ENCODE measurements at regions of chr4 and their contacts with region 1.

Region 1: DNA sequence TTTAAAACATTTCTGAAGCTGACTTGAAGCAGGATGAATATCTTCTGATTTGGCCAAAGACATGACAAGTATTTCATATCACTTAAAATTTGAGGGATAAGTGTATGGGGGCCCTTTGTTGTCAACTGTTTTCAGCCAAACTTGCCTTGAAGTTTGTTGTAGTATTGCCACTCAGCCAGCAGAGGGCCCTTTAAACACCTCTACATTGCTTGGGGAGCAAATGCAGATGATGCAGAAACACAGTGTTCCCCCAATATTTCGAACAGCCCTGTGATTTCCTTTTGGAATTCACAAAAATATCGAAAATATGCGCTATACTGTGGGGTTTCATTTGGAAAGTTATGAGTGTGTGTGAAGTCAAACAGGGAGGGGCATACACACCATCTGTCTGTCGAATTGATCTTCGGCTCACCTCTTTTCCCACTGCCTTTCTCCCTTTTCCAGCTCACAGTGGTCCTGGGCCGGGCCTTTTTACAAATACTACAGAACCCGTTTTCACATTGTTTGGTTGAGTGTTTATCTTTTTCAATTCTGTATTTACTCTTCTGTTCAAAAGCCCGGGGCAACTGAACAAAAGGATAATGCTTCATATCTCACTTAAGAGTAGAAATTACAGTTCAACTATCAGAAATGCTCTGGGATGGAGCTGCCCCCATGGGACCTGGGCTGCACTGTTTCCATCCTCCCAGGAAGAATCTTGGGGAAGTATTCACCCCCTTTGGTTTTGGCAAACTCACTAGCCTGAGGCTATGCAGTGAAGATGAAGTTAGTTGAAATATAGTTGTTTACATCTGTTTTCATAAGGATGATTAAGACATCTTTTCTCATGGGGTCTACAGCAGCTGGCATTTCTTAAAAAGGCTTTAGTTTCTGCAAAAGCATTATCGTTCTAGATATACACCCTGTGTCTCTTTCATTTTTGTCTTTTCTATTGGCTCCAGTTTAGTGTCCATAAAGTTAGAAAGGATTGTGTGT is 137.6 kb downstream of the EGF start:
- DNase-seq: peak; percentile 27
- H3K4me3 Mint-ChIP-seq: no peak overlapping the region
- H3K27ac Mint-ChIP-seq: no peak overlapping the region
- H3K4me1 Mint-ChIP-seq: peaks cover 11% of the 10 kb centered on the region
- H3K27me3 Mint-ChIP-seq: no peaks in the 10 kb centered on the region

Region 2: DNA sequence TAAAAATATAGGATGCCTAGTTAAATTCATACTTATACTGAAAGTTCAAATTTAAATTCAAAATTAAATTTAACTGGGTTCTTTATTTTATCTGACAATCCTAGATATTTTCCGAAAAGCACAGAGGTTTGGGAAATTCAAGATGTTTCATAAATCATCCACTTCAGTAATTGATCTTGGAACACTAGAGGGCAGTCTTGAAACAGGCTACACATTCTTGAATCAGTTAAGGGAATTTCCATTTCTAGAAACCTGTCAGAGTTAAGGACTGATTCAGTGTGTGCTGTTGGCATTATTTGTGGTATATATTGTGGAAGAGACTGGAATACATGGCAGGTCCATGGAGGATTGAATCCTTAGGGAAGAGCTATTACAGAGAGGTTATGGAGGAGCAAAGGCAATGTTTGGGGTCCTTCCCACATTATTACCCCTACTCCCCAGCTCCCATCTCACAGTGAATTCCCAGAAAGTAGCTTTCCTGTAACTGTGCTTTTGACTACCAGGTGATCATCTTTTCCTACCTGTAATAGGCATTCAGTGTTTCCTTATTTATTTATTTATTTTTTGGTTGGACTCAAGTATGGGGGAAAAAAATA is 44.7 kb before region 1 on chr4:
- intact Hi-C with region 1: no loop called
- DNase-seq: no peak
- H3K4me3 Mint-ChIP-seq: no peak overlapping the region
- H3K27ac Mint-ChIP-seq: no peak overlapping the region
- H3K4me1 Mint-ChIP-seq: peaks cover 13% of the 10 kb centered on the region
- H3K27me3 Mint-ChIP-seq: peaks cover 10% of the 10 kb centered on the region

Region 3: DNA sequence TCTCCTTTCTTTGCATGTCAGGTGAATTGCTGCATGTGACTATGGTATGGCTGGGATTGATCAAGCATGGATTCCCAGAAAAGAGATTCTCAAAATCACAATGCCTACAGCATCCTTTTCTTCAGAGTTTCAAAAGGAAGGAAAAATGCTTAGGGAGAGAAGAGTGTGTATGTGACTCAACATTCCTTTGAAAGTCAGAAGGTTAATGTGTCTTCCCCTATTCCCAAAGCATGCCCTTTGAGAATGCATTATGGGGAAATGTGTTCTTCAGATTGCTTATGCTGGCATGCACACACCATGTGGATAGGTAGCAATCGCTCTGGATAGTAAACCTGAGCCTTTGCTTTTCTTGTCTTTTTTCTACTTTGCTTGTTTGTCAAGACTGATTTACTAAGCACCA is 69.6 kb after region 1 on chr4:
- intact Hi-C with region 1: loop called (anchors 10 kb)
- DNase-seq: no peak
- H3K4me3 Mint-ChIP-seq: no peak overlapping the region
- H3K27ac Mint-ChIP-seq: no peak overlapping the region
- H3K4me1 Mint-ChIP-seq: peaks cover 14% of the 10 kb centered on the region
- H3K27me3 Mint-ChIP-seq: no peaks in the 10 kb centered on the region

Region 4: DNA sequence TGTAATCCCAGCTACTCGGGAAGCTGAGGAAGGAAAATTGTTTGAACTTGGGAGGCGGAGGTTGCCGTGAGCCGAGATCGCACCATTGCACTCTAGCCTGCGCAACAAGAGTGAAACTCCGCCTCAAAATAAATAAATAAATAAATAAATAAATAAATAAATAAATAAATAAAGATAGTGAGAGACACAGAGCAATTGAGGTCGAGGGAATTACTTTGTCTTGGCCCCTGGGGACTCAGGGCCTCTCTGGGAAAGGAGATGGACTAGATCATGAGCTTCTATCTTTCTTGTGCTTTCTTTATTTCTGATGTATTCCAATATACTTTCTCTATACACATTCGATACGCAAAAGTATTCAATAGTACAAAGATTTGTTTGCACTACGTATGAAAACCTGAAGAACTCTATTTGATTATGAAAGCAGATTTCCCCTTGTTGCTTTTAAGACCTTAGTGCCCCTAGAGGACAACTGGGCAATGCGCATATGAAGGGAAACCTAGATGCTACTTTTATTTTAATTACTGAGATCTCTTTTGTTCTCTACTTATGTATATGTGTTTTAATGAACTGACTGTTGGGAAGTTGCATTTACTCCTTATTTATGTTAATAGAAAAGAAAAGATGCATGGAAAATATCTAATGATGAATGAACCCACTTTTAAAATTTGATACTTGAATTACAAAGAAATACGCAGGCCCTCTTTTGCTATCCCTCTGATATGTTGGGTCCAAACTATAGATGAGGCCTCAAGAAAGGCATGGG is 160.9 kb after region 1 on chr4:
- intact Hi-C with region 1: loop called (anchors 1 kb)
- DNase-seq: no peak
- H3K4me3 Mint-ChIP-seq: no peak overlapping the region
- H3K27ac Mint-ChIP-seq: no peak overlapping the region
- H3K4me1 Mint-ChIP-seq: peaks cover 2% of the 10 kb centered on the region
- H3K27me3 Mint-ChIP-seq: peaks cover under 1% of the 10 kb centered on the region